OCI-LY7 (cell line): ENCODE measurements at regions of chr5 and their contacts with region 1.

Region 1: DNA sequence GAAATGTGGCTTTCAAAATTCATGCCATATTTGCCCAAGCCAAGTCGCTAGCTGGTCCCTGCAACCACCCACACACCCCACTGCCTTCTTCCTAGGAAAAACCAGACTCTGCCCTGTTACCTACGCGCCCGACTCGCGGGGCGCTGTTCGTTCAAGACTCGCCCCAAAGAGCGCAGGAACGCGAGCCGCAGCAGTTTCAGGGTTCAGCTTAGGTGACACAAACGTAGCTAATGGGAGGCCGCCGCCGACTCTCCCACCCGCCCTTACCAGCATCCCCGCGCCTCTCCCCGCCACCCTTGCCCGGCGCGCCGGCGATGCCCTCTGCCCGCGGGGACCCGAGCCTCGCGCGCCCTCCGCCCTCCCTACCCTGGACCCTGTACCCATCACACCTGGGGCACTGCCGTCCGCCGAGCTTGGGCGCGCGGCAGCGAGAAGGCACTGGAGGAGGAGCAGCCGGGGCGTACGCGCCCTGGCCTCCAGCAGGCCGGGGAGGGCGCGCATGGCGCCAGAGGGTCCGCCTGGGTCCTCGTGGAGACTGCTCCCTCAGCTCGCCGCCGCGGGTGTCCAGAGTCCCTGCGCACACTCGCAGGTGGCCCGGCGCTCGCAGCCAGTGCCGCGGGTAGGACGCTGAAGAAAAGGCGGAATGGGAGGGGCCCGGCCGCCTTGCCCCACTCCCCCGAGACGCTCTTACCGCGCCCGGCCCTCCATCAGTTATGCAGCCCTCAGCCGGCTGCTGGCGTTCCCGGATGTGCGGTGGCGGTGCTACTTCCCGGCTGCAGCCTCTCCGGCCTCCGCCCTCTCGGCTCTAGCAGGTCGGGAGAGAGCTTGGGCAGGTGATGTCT is at the start of gene EMB:
- DNase-seq: peak; percentile 93
- H3K4me3 ChIP-seq: peak within 1 kb of the TSS; percentile 88
- H3K27ac ChIP-seq: peak within 1 kb of the TSS; percentile 96
- H3K4me1 ChIP-seq: peaks cover 59% of the 10 kb centered on the region
- CTCF ChIP-seq: peak; percentile 71
- total RNA-seq, gene EMB: 75.7 and 78.9 TPM in 2 replicates

Region 2: GRCh38 chr5:50302815-50303490 is 137.9 kb before region 1 on chr5:
- CTCF ChIA-PET with region 1: no interaction called
- POLR2A ChIA-PET with region 1: no interaction called
- intact Hi-C with region 1: loop called (anchors 5 kb)
- DNase-seq: no peak
- H3K4me3 ChIP-seq: no peak overlapping the region
- H3K27ac ChIP-seq: peak overlapping the region; percentile 3
- H3K4me1 ChIP-seq: peaks cover 57% of the 10 kb centered on the region
- CTCF ChIP-seq: no peak

Region 3: GRCh38 chr5:50415912-50416311 is 25.0 kb before region 1 on chr5:
- CTCF ChIA-PET with region 1: no interaction called
- POLR2A ChIA-PET with region 1: interaction called, 28 read pairs
- intact Hi-C with region 1: loop called (anchors 1 kb)
- DNase-seq: peak; percentile 96
- H3K4me3 ChIP-seq: peak overlapping the region; percentile 60
- H3K27ac ChIP-seq: peak overlapping the region; percentile 98
- H3K4me1 ChIP-seq: peaks cover 85% of the 10 kb centered on the region
- CTCF ChIP-seq: no peak

Region 4: GRCh38 chr5:50501491-50502228 is 60.8 kb after region 1 on chr5:
- CTCF ChIA-PET with region 1: no interaction called
- POLR2A ChIA-PET with region 1: interaction called, 15 read pairs
- intact Hi-C with region 1: loop called (anchors 1 kb)
- DNase-seq: peak; percentile 89
- H3K4me3 ChIP-seq: peak overlapping the region; percentile 52
- H3K27ac ChIP-seq: peak overlapping the region; percentile 95
- H3K4me1 ChIP-seq: peaks cover 26% of the 10 kb centered on the region
- CTCF ChIP-seq: no peak

Region 5: GRCh38 chr5:50547303-50547702 is 106.4 kb after region 1 on chr5:
- CTCF ChIA-PET with region 1: no interaction called
- POLR2A ChIA-PET with region 1: no interaction called
- intact Hi-C with region 1: no loop called
- DNase-seq: peak; percentile 56
- H3K4me3 ChIP-seq: no peak overlapping the region
- H3K27ac ChIP-seq: peak overlapping the region; percentile 33
- H3K4me1 ChIP-seq: peaks cover 16% of the 10 kb centered on the region
- CTCF ChIP-seq: no peak

Region 6: DNA sequence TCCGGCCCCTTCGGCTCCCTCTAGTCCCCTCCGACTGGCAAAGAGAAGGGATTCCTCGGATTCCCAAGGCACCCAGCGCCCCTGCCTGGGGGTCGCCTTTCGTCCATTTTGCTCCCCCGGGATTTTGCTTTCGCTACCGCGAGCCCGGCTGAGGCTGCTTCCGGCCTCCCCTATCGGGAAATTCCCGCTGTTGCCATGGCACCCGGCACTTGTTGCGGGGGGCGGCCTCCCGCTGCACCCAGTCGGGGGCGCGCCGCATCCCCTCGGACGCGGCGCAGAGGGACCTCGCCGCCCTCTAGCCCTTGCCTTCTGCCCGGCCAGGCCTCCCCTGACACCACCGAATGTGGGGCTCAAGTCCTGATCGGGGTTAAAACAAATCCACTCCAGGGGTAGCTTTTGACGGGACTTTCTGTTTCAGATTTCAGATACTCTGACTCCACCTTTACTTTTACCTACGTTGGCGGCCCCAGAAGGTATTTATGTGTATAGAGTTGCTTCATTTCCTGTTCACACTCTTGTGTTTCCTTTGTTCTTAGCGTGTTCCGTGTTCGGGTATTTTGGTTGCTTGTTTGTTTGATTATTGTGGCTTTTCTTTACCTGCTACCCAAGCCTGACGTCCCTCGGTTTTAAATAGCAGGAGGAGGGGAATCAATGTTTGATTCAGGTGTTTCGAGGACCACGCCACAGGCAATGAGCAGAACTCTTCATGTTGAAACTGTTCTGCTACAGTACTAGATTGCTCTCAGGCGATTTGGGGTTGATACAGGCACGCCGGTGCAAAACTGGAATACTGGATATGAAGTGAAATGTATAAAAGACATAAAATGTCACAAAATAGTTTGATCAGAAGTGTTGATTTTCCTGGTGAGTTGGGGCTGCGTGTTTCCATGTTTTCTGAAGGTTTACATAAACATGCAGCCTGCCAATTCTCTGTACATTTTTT is 227.1 kb after region 1 on chr5:
- CTCF ChIA-PET with region 1: no interaction called
- POLR2A ChIA-PET with region 1: interaction called, 5 read pairs
- intact Hi-C with region 1: loop called (anchors 2 kb)
- DNase-seq: peak; percentile 88
- H3K4me3 ChIP-seq: peak overlapping the region; percentile 91
- H3K27ac ChIP-seq: peak overlapping the region; percentile 83
- H3K4me1 ChIP-seq: peaks cover 48% of the 10 kb centered on the region
- CTCF ChIP-seq: no peak; the same call in 1 of the 2 replicates

Region 7: GRCh38 chr5:50751064-50751657 is 310.3 kb after region 1 on chr5:
- CTCF ChIA-PET with region 1: no interaction called
- POLR2A ChIA-PET with region 1: interaction called, 3 read pairs
- intact Hi-C with region 1: loop called (anchors 2 kb)
- DNase-seq: peak; percentile 83
- H3K4me3 ChIP-seq: no peak overlapping the region
- H3K27ac ChIP-seq: no peak overlapping the region
- H3K4me1 ChIP-seq: peaks cover 25% of the 10 kb centered on the region
- CTCF ChIP-seq: peak; percentile 99

Region 8: DNA sequence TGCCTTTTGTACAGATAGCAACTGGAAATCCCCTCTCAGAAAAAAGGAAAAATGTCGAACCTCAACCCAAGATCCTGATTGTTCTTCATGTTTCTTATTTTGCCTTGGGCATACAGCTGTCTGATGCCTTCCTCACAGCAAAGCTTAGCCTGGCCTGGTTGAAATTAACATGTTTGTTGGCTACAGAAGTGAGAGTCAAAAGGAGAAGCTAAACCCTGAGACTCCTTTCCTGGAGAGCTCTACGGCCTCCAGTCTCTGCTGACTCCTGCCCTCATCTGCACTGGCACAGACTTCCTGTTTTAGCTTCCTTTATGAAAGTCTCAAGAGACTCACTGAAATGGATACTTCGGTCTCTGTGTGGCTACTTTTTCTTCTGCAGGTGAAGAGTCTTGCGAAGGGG is 412.3 kb after region 1 on chr5:
- CTCF ChIA-PET with region 1: no interaction called
- POLR2A ChIA-PET with region 1: no interaction called
- intact Hi-C with region 1: loop called (anchors 10 kb)
- DNase-seq: peak; percentile 93
- H3K4me3 ChIP-seq: peak overlapping the region; percentile 41
- H3K27ac ChIP-seq: peak overlapping the region; percentile 75
- H3K4me1 ChIP-seq: peaks cover 61% of the 10 kb centered on the region
- CTCF ChIP-seq: no peak

Region 9: GRCh38 chr5:50898966-50899365 is 458.1 kb after region 1 on chr5:
- CTCF ChIA-PET with region 1: no interaction called
- POLR2A ChIA-PET with region 1: no interaction called
- intact Hi-C with region 1: no loop called
- DNase-seq: no peak
- H3K4me3 ChIP-seq: no peak overlapping the region
- H3K27ac ChIP-seq: no peak overlapping the region
- H3K4me1 ChIP-seq: no peaks in the 10 kb centered on the region
- CTCF ChIP-seq: no peak